Psoas muscle (tissue), 8 donors: ENCODE measurements at regions of chr16 and their contacts with region 1.

Region 1: DNA sequence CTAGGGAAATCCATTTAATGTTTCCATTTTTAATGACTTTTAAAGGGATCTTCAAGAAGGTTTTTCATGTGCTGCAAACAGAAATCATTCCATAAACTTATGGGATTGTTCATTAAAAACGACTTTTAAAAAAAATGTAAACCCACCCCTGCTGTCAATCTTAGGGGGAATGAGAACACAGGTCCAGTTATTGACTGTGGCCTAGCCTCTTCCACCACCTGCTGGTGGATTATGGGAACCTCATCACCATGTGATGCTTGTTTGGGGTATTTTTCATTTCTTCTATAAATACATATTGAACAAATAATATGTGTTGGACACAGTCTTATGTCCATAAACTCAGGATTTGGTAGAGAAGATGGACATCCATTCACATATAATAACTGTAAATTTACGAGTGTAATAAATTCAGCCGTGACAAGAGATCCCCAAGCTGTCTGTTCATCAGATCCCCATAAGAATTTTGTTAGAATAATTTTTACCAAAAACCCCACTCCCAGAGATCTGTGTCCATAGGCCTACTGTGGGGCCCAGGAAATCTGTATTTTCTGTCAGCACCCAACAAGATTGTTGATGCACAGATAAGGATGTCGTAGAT is 42.0 kb upstream of the TMC5 start:
- DNase-seq: peak in 1 of 2 donors; percentile 16
- ATAC-seq: peak in 2 of 4 donors; percentile 59 to 72
- H3K4me3 ChIP-seq: no peak overlapping the region
- H3K27ac ChIP-seq: no peak overlapping the region
- H3K4me1 ChIP-seq: no peaks in the 10 kb centered on the region
- H3K27me3 ChIP-seq: no peaks in the 10 kb centered on the region
- CTCF ChIP-seq: peak; percentile 88

Region 2: GRCh38 chr16:18983565-18984424 is 391.9 kb before region 1 on chr16 and contains the start of gene TMC7:
- intact Hi-C with region 1: loop called (anchors 10 kb)
- DNase-seq: peak; percentile 71 to 81
- ATAC-seq: peak; percentile 93 to 97 (median 96)
- H3K4me3 ChIP-seq: peak within 1 kb of the TSS; percentile 67
- H3K27ac ChIP-seq: peak within 1 kb of the TSS; percentile 61
- H3K4me1 ChIP-seq: no peaks in the 10 kb centered on the region
- H3K27me3 ChIP-seq: no peaks in the 10 kb centered on the region
- CTCF ChIP-seq: peak; percentile 68
- total RNA-seq, gene TMC7: 0.32 to 1.8 (median 0.85) TPM

Region 3: DNA sequence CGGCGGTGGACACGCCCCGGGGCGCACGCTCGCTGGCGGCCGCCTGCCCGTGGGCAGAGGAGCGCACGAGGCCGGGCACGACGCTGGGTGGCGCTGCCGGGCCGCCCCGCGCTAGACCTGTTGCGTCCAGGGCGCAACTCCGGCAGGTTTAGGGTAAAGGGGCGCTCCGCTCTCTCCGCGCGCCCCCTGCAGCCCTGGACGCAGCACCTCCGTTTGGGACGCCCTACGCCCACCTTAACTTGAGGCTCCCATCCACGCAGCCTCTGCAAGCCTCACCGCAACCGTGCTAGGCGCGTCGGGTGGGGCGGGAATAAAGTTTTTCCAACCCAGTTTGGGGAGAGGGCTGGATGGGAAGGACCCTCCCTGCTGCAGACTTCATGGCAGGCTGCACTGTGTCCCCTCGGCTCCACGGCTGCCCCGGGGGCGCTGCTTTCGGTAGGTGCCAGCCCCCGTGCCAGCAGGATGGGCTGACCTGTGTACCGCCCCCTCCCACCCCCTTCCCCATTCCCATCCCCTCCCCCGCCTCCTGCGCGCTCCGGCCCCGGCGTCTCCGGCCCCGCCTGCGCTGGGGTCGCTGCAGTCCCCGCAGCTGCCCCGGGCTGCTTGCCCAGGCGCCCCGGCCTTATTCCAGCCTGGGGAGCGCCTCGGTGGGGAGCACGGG is 207.8 kb before region 1 on chr16 and contains the start of gene SYT17:
- intact Hi-C with region 1: loop called (anchors 5 to 10 kb)
- DNase-seq: peak; percentile 71 to 74
- ATAC-seq: peak; percentile 79 to 92 (median 82)
- H3K4me3 ChIP-seq: peak within 1 kb of the TSS; percentile 64
- H3K27ac ChIP-seq: no peak within 1 kb of the TSS
- H3K4me1 ChIP-seq: peaks cover 7% of the 10 kb centered on the region
- H3K27me3 ChIP-seq: peaks cover 0 to 26% (median 0%) of the 10 kb centered on the region in 3 donors
- CTCF ChIP-seq: peak; percentile 67
- total RNA-seq, gene SYT17: 0.08 to 0.58 (median 0.45) TPM

Region 4: DNA sequence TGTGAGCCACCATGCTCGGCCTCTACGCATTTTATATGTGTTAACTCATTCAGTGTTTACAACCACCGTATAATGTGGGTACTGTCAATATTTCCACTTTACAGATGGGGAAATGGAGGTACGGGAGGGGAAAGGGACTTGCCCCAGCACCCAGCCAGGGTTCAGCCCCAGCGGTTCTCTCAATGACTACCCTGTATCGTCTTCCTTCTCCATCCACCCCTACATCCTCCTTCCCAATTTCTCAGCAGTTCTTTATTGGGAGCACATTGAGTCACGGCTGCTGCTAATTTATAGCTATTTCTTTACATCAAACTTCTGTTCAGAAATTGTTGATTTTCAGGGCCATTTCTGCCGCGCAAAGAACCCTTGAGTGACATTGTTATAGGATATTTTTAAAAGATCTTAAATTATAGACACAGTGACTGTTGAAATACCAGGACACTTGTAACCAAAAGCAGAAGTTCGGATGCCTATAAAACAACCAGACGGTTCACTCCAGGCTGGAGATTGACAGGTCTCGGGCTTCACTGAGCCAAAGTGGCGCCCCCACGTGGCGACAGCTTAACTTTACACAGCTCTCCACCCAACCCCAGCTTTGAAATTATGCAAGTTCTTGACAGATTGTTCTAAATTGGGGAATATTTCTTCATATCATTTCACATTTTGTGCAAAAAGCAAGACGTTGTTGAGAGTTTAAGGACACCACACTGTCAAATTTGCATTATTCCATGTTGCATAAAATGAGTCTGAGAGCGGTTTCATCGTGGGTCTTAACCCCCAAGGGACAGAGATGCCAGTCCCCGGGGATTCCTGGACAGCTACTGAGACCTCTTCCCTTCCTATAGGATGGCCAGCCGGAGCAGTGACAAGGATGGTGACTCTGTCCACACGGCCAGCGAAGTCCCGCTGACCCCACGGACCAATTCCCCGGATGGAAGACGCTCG is 195.8 kb before region 1 on chr16:
- intact Hi-C with region 1: loop called in 1 of 2 experiments (anchors 10 kb)
- DNase-seq: peak; percentile 66 to 82
- ATAC-seq: peak in 2 of 4 donors; percentile 60 to 74
- H3K4me3 ChIP-seq: no peak overlapping the region
- H3K27ac ChIP-seq: no peak overlapping the region
- H3K4me1 ChIP-seq: no peaks in the 10 kb centered on the region
- H3K27me3 ChIP-seq: no peaks in the 10 kb centered on the region
- CTCF ChIP-seq: peak; percentile 58